ENCODE measurements at regions of chr2 and their contacts with region 1.

Region 1: GRCh38 chr2:86592547-86593230 is 29.4 kb upstream of the CHMP3 start:
- DNase-seq: no peak
- H3K4me3 ChIP-seq: no peak overlapping the region
- H3K27ac ChIP-seq: no peak overlapping the region
- H3K4me1 ChIP-seq: no peaks in the 10 kb centered on the region
- H3K27me3 ChIP-seq: no peaks in the 10 kb centered on the region
- CTCF ChIP-seq: no peak

Region 2: DNA sequence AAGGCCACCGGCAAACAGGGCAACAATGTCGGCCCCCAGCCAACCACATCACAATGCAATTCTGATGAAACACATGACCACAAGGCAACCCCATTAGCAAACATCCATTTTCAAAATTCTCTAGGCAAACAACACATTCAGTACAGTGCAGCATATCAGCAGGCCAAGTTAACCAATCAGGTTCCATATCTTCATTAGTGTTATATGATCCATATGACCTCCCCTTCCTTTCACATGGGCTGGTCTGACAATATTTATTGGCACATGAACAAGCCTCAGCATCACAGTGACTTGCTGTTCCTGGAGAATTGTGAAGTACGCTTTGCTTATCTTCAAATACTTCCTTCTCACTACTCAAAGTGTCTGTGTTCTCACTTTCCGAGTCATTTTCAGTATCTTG is 11.2 kb after region 1 on chr2:
- CTCF ChIA-PET with region 1: interaction called, 5 read pairs
- POLR2A ChIA-PET with region 1: no interaction called
- intact Hi-C with region 1: loop called (anchors 1 kb)
- DNase-seq: no peak
- H3K4me3 ChIP-seq: no peak overlapping the region
- H3K27ac ChIP-seq: no peak overlapping the region
- H3K4me1 ChIP-seq: no peaks in the 10 kb centered on the region
- H3K27me3 ChIP-seq: no peaks in the 10 kb centered on the region
- CTCF ChIP-seq: no peak

Region 3: DNA sequence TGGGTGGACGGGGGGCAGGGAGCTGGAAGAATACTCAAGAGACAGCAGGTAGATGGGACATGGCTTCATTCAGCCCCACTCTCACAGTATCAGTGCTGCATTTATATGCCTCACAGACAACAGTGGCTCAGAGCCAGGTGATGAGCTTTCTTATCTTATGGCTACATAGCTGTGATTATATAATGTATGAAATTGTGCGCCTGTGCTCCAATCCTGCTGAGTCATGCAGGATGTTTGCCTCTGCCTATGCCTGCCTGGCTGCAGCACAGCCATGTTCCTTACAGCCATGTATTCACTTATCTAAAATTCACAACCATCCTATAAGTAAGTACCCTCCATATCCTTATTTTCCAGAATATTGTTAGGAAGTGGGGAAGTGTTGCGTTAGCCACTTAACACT is 68.6 kb after region 1 on chr2:
- CTCF ChIA-PET with region 1: no interaction called
- POLR2A ChIA-PET with region 1: no interaction called
- intact Hi-C with region 1: no loop called
- DNase-seq: no peak
- H3K4me3 ChIP-seq: no peak overlapping the region
- H3K27ac ChIP-seq: no peak overlapping the region
- H3K4me1 ChIP-seq: no peaks in the 10 kb centered on the region
- H3K27me3 ChIP-seq: no peaks in the 10 kb centered on the region
- CTCF ChIP-seq: no peak

Measured in A673 (cell line).